ENCODE measurements at regions of chr5 and their contacts with region 1.

Region 1: GRCh38 chr5:76601470-76601869 is 21.7 kb downstream of the F2RL2 start:
- DNase-seq: no peak
- H3K4me3 ChIP-seq: no peak overlapping the region
- H3K27ac ChIP-seq: no peak overlapping the region
- H3K4me1 ChIP-seq: no peaks in the 10 kb centered on the region
- H3K27me3 ChIP-seq: no peaks in the 10 kb centered on the region
- CTCF ChIP-seq: peak in 3 of 4 experiments; percentile 50 to 66 (median 52)
- EP300 ChIP-seq: no peak
- POLR2A ChIP-seq: no peak

Region 2: DNA sequence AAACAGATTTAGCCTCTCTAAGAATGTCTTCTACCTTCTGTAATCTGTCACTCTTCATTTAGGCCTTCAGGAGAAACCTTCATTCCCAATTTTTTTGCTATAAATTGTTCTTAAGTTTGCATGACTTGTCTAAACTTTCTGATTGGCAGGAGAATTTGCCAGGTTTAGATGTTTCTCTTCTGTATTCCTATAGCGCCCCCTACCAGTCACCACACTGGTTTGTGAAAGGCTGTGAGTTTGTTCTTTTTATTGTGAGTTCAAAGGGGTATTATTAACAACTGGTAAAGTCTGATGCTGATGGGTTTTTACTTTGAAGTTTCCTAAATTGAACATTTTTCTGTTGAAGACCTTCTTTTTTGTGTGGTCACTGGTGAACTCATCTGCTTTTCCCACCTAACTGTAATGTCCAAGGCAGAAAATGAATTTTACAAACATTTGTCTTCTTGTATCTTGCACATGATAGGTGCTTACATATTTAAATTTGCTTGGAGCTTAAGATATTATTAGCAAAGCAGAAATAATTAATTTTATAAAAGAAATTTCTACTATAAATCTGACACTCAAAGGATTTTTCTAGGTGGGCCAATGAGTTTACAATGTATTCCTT is 40.1 kb after region 1 on chr5:
- intact Hi-C with region 1: loop called (anchors 5 kb)
- DNase-seq: no peak
- H3K4me3 ChIP-seq: no peak overlapping the region
- H3K27ac ChIP-seq: no peak overlapping the region
- H3K4me1 ChIP-seq: no peaks in the 10 kb centered on the region
- H3K27me3 ChIP-seq: no peaks in the 10 kb centered on the region
- CTCF ChIP-seq: peak in 3 of 4 experiments; percentile 32 to 43 (median 36)
- EP300 ChIP-seq: no peak
- POLR2A ChIP-seq: no peak

Region 3: DNA sequence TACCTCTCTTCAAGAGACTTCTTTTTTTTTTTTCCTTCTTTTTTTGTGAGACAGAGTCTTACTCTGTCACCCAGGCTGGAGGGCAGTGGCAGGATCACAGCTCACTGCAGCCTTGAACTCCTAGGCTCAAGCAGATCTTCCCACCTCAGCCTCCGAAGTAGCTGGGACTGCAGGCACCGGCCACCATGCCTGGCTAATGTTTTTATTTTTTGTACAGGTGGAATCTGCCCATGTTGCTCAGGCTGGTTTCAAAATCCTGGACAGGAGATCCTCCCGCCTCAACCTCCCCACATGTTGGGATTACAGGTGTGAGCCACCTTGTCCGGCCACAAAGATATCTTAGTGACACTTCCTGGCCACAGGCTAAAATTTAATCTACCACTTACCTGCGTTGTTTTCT is 174.5 kb after region 1 on chr5:
- intact Hi-C with region 1: loop called (anchors 2 kb)
- DNase-seq: no peak
- H3K4me3 ChIP-seq: no peak overlapping the region
- H3K27ac ChIP-seq: no peak overlapping the region
- H3K4me1 ChIP-seq: no peaks in the 10 kb centered on the region
- H3K27me3 ChIP-seq: no peaks in the 10 kb centered on the region
- CTCF ChIP-seq: no peak
- EP300 ChIP-seq: no peak
- POLR2A ChIP-seq: no peak

Region 4: DNA sequence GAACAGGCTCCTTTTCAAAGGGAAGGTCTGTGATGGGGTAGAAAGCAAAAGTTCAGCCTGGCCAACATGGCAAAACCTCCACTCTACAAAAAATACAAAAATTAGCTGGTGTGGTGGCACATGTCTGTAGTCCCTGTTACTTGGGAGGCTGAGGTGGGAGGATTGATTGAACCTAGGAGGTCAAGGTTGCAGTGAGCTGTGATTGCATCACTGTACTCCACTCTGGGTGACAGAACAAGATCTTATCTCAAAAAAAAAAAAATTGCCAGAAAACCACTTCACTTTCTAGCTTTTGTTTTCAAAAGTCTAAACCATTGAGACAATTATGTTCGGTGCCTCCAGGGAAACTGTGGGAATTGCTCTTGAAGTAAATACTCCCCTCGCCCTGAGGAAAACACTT is 291.8 kb after region 1 on chr5:
- intact Hi-C with region 1: no loop called
- DNase-seq: no peak
- H3K4me3 ChIP-seq: no peak overlapping the region
- H3K27ac ChIP-seq: no peak overlapping the region
- H3K4me1 ChIP-seq: no peaks in the 10 kb centered on the region
- H3K27me3 ChIP-seq: no peaks in the 10 kb centered on the region
- CTCF ChIP-seq: no peak
- EP300 ChIP-seq: no peak
- POLR2A ChIP-seq: no peak